ENCODE measurements at regions of chr15 and their contacts with region 1.

Region 1: DNA sequence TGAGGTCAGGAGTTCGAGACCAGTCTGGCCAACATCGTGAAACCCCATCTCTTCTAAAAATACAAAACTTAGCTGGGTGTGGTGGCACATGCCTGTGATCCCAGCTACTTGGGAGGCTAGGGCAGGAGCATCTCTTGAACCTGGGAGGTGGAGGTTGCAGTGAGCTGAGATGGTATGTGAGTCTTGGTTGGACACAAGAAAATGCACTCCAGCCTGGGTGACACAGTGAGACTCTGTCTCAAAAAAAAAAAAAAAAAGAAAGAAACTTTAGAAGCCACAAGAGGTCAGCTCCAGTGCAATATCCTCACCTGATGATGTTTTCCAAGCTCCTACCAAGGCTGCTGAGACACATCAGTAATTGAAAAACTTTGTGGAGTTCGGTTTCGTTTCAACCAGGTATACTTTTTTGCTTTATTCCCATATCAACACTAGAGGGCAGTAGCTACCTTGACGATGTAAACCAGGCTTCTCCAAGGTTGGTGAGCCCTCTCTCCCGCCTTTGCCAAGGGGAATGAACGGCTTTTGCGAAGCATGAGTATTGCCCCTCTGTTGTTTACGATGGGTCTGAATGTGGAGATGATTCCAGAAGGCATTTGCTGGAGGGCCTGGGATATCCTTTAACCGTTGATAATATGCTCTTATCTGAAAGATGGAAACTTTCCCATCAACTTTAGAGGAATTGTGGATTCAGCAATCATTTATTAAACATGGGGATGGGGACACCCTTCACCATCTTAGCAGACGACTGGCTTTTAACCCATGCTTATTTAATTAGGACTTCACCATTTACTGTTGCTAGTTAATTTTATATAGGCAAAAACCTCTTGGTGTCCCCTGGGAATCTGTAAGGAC is 202.8 kb downstream of the SV2B start:
- DNase-seq: no peak
- H3K4me3 ChIP-seq: no peak overlapping the region
- H3K27ac ChIP-seq: no peak overlapping the region
- H3K4me1 ChIP-seq: peaks cover 0 to 15% (median 3%) of the 10 kb centered on the region in 3 donors
- H3K27me3 ChIP-seq: peaks cover 0 to 39% (median 5%) of the 10 kb centered on the region in 4 donors
- CTCF ChIP-seq: peak; percentile 51 to 80 (median 71)
- POLR2A ChIP-seq: no peak

Region 2: GRCh38 chr15:91694831-91695210 is 392.0 kb after region 1 on chr15:
- intact Hi-C with region 1: loop called (anchors 10 kb)
- DNase-seq: no peak
- H3K4me3 ChIP-seq: peak overlapping the region in 3 of 4 donors; percentile 26 to 50 (median 34)
- H3K27ac ChIP-seq: peak overlapping the region; percentile 56 to 89 (median 84)
- H3K4me1 ChIP-seq: peaks cover 0 to 9% (median 0%) of the 10 kb centered on the region in 3 donors
- H3K27me3 ChIP-seq: no peaks in the 10 kb centered on the region
- CTCF ChIP-seq: no peak
- POLR2A ChIP-seq: no peak

Measured in esophagus squamous epithelium (tissue), 5 donors.